Left colon (tissue), 2 donors: ENCODE measurements at regions of chr7 and their contacts with region 1.

Region 1: GRCh38 chr7:126119981-126120380 is 1132.8 kb downstream of the GRM8 start:
- DNase-seq: no peak
- ATAC-seq: no peak

Region 2: GRCh38 chr7:125618516-125618915 is 501.5 kb before region 1 on chr7:
- intact Hi-C with region 1: no loop called
- DNase-seq: no peak
- ATAC-seq: no peak

Region 3: DNA sequence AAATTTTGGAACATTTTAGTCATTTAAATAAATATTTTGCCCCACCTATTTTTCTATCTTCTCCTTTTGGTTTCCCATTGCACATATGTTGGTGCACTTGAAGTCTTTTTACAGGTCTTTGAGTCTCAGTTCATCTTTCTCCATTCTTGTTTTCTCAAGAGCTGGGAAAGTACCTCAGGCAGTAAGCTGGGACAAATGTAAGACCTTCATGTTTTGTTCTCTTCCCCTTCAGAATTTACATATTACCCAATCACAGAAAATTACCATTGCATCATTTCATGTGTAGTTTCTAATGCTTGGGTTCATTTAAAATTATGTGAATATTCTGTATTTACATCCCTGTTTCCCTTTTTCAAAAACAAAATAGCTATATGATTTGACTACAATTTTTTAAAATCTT is 40.4 kb before region 1 on chr7:
- intact Hi-C with region 1: loop called in 1 of 2 experiments (anchors 10 kb)
- DNase-seq: no peak
- ATAC-seq: no peak